Activated naive CD8-positive, alpha-beta T cell treated with anti-CD3 and anti-CD28 coated beads, Interleukin-2, amount 10 ng/mL, durations not matched to agents 7 days and 5 days (primary cell): ENCODE measurements at regions of chr11 and their contacts with region 1.

Region 1: DNA sequence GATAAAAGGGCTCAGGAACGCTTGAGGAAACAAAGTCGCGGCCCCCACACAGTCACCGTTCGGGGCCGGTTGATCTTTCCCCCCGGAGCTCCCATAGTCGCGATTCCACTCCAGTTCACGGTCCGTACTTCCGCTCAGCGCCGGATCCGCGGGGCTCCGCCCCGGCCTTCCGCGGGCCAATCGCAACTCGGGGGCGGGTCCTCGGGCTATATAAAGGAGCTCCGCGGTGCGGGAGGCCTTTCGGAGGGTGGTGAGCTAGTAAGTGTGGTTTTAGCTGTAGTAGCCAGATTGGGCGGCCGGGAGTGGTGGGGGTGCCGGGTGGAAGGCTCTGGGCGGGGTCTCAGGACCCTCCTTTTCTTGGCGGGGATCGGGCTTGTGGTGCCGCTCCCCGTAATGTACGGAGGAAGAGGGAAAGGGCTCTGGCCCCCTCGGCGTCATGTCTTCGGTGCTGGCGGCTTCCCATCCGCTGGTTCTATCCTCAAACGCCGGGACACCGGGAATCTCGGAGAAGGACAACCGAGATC is at the starts of genes C11orf98 and CSKMT:
- DNase-seq: peak; percentile 97
- ATAC-seq: peak; percentile 88
- H3K4me3 Mint-ChIP-seq: peak within 1 kb of the TSS; percentile 97
- H3K27ac Mint-ChIP-seq: peak within 1 kb of the TSS; percentile 94
- H3K4me1 Mint-ChIP-seq: peaks cover 34% of the 10 kb centered on the region
- H3K27me3 Mint-ChIP-seq: no peaks in the 10 kb centered on the region
- total RNA-seq, gene C11orf98: 99.9 to 104 TPM
- total RNA-seq, gene CSKMT: 23.3 to 27.3 TPM

Region 2: DNA sequence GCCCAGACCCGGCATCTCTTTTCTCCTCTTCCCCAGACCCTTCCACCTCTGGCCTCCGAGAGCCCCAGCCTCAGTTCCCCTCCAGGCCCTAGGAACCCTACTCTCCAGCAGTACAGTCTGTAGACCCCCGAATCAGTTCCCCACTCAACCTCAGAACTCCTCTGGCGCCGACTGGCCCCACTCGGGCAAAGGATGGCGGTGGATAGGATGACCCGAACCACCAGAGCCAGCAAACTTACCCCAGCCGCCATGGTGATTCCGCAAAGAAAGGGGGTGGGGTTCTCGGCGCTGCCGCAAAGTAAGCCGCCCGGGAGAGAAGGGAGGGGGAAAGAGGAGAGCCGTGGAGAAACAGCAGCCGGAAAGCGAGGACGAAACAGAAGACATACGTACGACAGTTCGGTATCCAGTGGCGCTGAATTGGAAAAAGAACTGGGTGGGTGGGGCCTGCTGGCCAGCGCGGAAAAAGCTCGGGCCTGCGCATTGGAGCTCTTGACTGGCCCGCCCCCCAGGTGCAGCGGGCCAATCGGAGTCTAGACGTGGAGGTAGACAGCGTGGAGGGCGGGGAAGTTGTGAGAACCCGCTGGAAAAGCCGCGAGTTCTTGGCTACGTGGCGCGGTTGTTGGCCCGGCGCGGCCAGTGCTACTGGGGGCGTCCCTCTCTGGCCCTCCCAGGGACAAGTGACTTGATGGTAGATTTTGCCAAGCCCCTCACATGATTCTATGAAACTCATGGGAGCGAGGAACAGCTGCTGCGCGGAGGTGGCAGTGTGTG is 91.4 kb before region 1 on chr11 and contains the start of gene EEF1G:
- POLR2A ChIA-PET with region 1: interaction called, 16 read pairs
- DNase-seq: peak; percentile 94
- ATAC-seq: peak; percentile 95
- H3K4me3 Mint-ChIP-seq: peak within 1 kb of the TSS; percentile 99
- H3K27ac Mint-ChIP-seq: peak within 1 kb of the TSS; percentile 95
- H3K4me1 Mint-ChIP-seq: peaks cover 41% of the 10 kb centered on the region
- H3K27me3 Mint-ChIP-seq: no peaks in the 10 kb centered on the region
- total RNA-seq, gene EEF1G: 1,132 to 1,152 TPM

Region 3: DNA sequence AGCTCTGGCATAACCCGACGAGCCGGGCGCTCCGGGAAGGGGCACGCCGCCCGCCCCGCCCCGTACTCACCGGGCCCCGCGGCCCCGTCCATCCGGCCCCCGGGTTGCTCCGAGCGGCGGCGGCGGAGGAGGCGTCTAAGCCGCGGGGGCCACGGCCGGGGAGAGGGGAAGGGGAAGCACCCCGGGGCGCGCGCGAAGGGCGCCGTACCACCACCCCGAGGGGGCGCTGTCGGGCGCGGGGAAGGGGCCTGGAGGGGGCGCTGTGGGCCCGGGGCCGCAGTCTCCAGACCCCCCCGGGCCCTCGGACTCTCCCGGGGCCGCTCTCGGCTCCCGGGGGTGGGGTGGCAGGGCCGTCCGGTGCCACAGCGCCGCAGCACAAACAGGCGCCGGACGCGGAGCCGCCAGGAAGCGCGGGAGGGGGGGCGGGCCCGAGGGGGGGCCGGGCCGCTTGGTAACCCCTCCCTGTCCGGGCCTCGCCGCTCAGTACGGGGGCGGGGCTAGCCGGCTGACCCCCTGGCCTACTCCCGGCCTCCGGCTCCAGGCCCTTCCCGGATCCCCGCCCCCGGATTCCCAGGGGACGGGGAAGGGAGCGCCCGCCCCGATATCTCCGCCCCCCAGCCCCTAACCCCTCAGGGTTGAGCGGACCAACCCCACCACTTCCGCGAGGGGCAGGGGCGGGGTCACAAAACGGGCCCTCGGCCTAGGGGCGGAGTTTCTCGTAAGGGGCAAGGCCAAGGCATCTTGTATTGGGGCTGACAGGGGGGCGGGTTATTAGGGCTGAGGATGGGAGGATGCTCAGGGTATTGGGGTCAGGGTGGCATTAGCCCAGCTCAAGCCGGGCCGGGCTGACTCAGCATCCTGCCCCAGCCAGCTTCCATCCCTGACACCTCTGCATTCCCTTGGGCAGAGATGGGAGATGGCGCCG is 52.5 kb before region 1 on chr11 and contains the starts of genes EML3 and ROM1:
- POLR2A ChIA-PET with region 1: interaction called, 33 read pairs
- DNase-seq: peak; percentile 96
- ATAC-seq: peak; percentile 74
- H3K4me3 Mint-ChIP-seq: peak within 1 kb of the TSS; percentile 90
- H3K27ac Mint-ChIP-seq: peak within 1 kb of the TSS; percentile 93
- H3K4me1 Mint-ChIP-seq: peaks cover 39% of the 10 kb centered on the region
- H3K27me3 Mint-ChIP-seq: no peaks in the 10 kb centered on the region
- total RNA-seq, gene EML3: 183 to 185 TPM
- total RNA-seq, gene ROM1: 1.4 to 2.4 TPM

Region 4: DNA sequence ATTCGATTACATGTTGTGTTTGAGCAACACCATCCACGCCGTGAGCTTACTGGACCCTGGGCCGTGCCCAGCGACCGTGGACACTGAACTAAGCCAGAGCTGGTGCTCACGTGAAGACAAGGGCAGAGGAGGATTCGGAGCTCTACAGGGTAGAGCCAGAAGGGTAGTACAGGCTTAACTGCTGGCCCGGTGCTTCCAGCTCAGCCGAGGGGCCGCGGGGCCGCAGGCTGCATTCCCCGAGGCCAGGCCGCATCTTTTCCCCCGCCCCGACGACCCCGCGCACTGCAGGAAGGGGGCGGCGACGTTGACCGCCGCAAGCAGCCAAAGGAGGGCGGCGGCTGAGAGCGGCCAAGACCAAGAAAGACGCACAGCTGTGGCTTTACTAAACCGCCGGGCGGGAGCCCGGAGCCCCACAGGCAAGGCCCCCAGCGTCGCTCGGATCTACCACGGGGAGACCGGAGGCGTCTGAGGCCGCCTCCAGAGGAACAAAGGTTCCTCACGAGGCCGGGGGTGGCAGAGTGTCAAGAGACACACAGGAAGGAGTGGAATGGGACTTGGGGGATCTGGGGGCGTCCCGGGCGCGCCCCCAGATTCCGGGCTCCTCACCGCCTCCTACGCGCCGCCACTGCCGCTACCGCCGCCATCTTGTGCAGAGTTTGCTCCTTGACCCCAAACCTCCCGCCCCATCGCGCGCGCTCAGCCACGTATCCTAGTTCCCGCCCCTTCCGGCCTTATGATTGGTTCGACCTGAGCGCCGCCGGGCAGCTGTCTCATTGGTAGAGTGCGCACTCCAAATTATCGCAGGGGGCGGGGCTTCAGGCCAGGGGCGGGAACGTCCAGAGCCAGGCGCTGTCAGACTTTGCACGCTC is 18.9 kb before region 1 on chr11 and contains the start of gene GANAB:
- POLR2A ChIA-PET with region 1: interaction called, 187 read pairs
- DNase-seq: peak; percentile 96
- ATAC-seq: peak; percentile 98
- H3K4me3 Mint-ChIP-seq: peak within 1 kb of the TSS; percentile 99
- H3K27ac Mint-ChIP-seq: peak within 1 kb of the TSS; percentile 96
- H3K4me1 Mint-ChIP-seq: peaks cover 24% of the 10 kb centered on the region
- H3K27me3 Mint-ChIP-seq: no peaks in the 10 kb centered on the region
- total RNA-seq, gene GANAB: 291 to 300 TPM

Region 5: GRCh38 chr11:62705880-62706849 is 41.0 kb after region 1 on chr11:
- POLR2A ChIA-PET with region 1: interaction called, 26 read pairs
- DNase-seq: peak; percentile 95
- ATAC-seq: peak; percentile 43
- H3K4me3 Mint-ChIP-seq: peak overlapping the region; percentile 91
- H3K27ac Mint-ChIP-seq: peak overlapping the region; percentile 73
- H3K4me1 Mint-ChIP-seq: peaks cover 39% of the 10 kb centered on the region
- H3K27me3 Mint-ChIP-seq: no peaks in the 10 kb centered on the region

Region 6: DNA sequence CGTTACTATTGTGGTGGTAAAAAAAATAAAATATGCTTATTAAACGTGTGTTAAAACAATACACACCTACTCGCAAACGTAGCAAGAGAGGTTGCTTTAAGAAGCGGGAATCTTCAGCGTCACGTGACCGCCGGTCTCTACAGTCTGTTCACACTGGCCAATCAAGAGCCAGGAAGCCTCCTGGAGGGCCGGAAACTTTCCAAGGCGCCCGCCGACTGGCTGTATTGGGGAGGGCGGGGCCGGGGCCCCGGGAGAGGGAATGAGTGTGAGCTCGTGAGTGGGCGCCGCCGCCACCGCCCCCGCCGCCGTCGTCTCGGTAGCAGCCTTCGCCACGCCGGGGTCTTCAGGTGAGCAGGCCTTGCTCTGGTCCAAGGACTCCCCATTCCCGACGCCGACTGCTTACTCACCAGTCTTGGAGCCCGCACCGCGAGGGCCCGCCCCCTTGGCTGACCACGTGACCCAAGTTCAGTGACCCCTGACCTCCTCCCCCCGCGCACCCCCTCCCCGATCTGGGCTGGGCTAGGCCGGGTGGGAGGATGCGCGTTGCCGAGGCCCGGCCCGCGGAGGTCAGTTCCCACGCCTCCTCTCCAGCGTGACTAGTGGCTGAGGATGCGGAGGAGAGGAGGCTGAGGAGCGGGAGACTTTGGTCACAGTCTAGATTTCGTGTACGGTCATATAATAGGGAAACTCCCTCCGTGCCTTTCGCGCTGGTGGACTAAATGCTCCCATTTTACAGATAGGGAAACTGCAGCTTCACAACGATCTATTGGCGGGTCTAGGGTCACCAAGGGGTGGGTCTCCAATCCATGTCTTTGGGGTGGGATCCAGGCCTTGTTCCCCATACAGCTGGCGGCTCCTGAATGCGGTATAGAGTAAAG is 106.2 kb after region 1 on chr11 and contains the start of gene TAF6L:
- POLR2A ChIA-PET with region 1: interaction called, 14 read pairs
- DNase-seq: peak; percentile 95
- ATAC-seq: peak; percentile 83
- H3K4me3 Mint-ChIP-seq: peak within 1 kb of the TSS; percentile 92
- H3K27ac Mint-ChIP-seq: peak within 1 kb of the TSS; percentile 94
- H3K4me1 Mint-ChIP-seq: peaks cover 13% of the 10 kb centered on the region
- H3K27me3 Mint-ChIP-seq: no peaks in the 10 kb centered on the region
- total RNA-seq, gene TAF6L: 20.6 to 22.2 TPM